ENCODE measurements at regions of chr12 and their contacts with region 1.

Region 1: DNA sequence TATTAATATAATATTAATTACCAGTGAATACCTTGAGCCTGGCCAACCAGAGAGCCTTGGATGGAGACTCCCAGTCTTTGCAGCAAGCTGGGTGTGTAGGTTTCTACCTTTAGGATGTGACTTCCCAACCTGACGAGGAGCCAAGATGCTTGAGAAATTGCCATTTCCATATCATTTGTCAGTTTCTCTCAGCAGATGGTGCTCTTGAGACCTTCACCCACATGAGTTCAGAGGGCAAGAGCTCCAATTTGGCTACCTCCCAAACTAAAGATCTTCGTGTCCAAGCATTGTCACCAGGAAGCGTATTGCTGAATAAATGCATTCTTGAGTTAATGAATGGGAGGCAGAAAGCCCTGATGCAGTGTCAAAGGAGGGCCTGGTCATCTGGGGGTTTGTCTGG is 106.4 kb upstream of the TBX5 start:
- DNase-seq: no peak
- H3K4me3 ChIP-seq: no peak overlapping the region
- H3K27ac ChIP-seq: no peak overlapping the region
- H3K4me1 ChIP-seq: no peaks in the 10 kb centered on the region
- H3K27me3 ChIP-seq: no peaks in the 10 kb centered on the region
- CTCF ChIP-seq: no peak
- EP300 ChIP-seq: no peak
- POLR2A ChIP-seq: no peak

Region 2: GRCh38 chr12:113980537-113981337 is 531.6 kb before region 1 on chr12:
- intact Hi-C with region 1: loop called in 1 of 4 experiments (anchors 10 kb)
- DNase-seq: no peak
- H3K4me3 ChIP-seq: no peak overlapping the region
- H3K27ac ChIP-seq: no peak overlapping the region
- H3K4me1 ChIP-seq: no peaks in the 10 kb centered on the region
- H3K27me3 ChIP-seq: no peaks in the 10 kb centered on the region
- CTCF ChIP-seq: peak in 2 of 3 donors; percentile 31 to 50
- EP300 ChIP-seq: no peak
- POLR2A ChIP-seq: no peak

Measured in ovary (tissue), 10 donors.